ENCODE measurements at regions of chr4 and their contacts with region 1.

Region 1: GRCh38 chr4:38275331-38276100 is 315.3 kb downstream of the PTTG2 start:
- DNase-seq: peak; percentile 51 to 64
- H3K4me3 ChIP-seq: no peak overlapping the region
- H3K4me3 Mint-ChIP-seq: no peak overlapping the region
- H3K27ac Mint-ChIP-seq: peak overlapping the region; percentile 0
- H3K4me1 ChIP-seq: peaks cover 37% of the 10 kb centered on the region
- H3K4me1 Mint-ChIP-seq: peaks cover 22% of the 10 kb centered on the region
- H3K27me3 ChIP-seq: no peaks in the 10 kb centered on the region
- H3K27me3 Mint-ChIP-seq: no peaks in the 10 kb centered on the region
- CTCF ChIP-seq: no peak

Region 2: GRCh38 chr4:38230121-38230801 is 45.3 kb before region 1 on chr4:
- CTCF ChIA-PET with region 1: no interaction called
- POLR2A ChIA-PET with region 1: no interaction called
- intact Hi-C with region 1: loop called (anchors 1 kb)
- DNase-seq: peak; percentile 70 to 86
- H3K4me3 ChIP-seq: no peak overlapping the region
- H3K4me3 Mint-ChIP-seq: peak overlapping the region; percentile 10
- H3K27ac Mint-ChIP-seq: peak overlapping the region; percentile 46
- H3K4me1 ChIP-seq: peaks cover 23% of the 10 kb centered on the region
- H3K4me1 Mint-ChIP-seq: peaks cover 32% of the 10 kb centered on the region
- H3K27me3 ChIP-seq: no peaks in the 10 kb centered on the region; the same call in 1 of the 2 replicates
- H3K27me3 Mint-ChIP-seq: no peaks in the 10 kb centered on the region
- CTCF ChIP-seq: no peak

Region 3: DNA sequence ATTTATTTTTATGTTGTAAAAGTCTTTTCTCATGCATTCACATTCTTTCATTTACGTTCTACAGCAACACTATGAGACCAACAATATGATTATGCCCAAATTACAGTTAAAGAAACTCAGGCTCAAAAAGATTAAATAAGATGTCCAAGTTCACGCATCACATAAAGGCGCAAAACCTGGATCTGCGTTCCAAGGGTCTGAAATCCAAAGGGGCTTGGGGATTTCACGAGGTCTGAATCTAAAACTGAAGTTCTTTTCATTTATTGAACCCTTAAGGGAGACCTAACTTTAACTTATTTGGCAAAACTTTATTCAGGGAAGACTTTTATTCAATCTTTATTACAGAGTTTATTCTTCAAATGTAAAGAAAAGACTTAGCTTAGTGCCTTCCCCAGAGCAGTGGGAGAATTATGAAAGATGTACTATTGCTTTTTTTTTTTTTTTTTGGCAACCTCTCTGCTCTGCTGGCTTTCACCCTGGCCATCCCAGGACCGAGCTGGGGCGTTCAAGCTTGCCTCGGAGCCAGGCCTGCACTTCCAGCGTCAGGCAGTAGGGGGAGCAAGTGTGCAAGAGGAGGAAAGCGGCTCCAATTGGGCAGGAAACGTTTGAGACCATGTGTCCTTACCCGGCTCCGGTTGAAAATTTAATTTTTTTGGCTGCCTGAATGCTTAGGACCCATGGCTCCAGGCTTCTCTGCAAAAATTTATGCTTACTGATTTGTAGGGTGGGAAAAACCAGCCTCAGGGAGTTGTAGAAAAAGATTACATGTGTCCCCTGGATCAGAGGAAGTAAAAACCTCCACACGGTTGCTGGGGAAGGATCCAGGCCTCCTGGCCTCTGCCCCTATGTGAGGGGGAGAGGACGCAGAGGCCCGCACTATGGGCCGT is 44.2 kb after region 1 on chr4:
- CTCF ChIA-PET with region 1: interaction called, 10 read pairs
- POLR2A ChIA-PET with region 1: no interaction called
- intact Hi-C with region 1: no loop called
- DNase-seq: peak; percentile 83 to 89
- H3K4me3 ChIP-seq: no peak overlapping the region
- H3K4me3 Mint-ChIP-seq: peak overlapping the region; percentile 64
- H3K27ac Mint-ChIP-seq: no peak overlapping the region
- H3K4me1 ChIP-seq: peaks cover 17% of the 10 kb centered on the region
- H3K4me1 Mint-ChIP-seq: no peaks in the 10 kb centered on the region
- H3K27me3 ChIP-seq: no peaks in the 10 kb centered on the region
- H3K27me3 Mint-ChIP-seq: no peaks in the 10 kb centered on the region
- CTCF ChIP-seq: peak; percentile 91 to 92

Region 4: DNA sequence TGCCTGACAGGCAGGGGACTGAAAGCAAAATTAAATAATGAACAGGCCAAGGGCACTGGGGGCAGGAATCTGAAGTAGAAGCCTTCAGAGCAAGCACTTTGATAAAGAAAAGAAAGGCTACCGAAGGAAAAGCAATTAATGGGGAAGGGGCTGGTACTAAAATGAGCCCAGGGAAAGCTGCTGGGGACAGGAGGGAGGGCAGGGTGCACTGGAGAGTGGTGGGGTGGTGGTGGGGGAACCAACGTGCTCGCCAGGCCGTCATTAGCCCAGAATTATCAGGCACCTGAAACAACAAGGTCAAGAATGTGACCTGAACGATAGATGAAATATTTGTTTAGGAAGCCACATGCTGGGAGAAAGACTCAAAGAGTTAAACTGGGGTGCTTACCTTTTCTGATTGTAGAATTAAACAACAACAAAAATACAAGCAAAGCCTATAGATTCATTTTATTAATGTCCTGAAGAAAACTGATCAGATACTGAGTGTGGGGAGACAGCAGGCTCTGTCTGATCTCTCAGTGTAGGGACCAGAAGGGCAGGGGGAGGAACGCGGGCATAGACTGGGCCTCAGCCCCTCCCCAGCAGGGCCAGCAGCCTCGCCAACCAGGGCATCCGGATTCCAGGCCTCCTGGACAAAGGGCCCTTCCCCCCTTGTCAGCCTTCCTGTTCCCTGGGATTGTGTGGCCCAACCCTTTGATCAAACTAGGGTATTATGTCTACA is 148.8 kb after region 1 on chr4:
- CTCF ChIA-PET with region 1: no interaction called
- POLR2A ChIA-PET with region 1: no interaction called
- intact Hi-C with region 1: loop called (anchors 1 kb)
- DNase-seq: peak; percentile 67 to 84
- H3K4me3 ChIP-seq: no peak overlapping the region
- H3K4me3 Mint-ChIP-seq: peak overlapping the region; percentile 52
- H3K27ac Mint-ChIP-seq: peak overlapping the region; percentile 79
- H3K4me1 ChIP-seq: peaks cover 22% of the 10 kb centered on the region
- H3K4me1 Mint-ChIP-seq: peaks cover 22% of the 10 kb centered on the region
- H3K27me3 ChIP-seq: no peaks in the 10 kb centered on the region
- H3K27me3 Mint-ChIP-seq: no peaks in the 10 kb centered on the region
- CTCF ChIP-seq: no peak

Region 5: DNA sequence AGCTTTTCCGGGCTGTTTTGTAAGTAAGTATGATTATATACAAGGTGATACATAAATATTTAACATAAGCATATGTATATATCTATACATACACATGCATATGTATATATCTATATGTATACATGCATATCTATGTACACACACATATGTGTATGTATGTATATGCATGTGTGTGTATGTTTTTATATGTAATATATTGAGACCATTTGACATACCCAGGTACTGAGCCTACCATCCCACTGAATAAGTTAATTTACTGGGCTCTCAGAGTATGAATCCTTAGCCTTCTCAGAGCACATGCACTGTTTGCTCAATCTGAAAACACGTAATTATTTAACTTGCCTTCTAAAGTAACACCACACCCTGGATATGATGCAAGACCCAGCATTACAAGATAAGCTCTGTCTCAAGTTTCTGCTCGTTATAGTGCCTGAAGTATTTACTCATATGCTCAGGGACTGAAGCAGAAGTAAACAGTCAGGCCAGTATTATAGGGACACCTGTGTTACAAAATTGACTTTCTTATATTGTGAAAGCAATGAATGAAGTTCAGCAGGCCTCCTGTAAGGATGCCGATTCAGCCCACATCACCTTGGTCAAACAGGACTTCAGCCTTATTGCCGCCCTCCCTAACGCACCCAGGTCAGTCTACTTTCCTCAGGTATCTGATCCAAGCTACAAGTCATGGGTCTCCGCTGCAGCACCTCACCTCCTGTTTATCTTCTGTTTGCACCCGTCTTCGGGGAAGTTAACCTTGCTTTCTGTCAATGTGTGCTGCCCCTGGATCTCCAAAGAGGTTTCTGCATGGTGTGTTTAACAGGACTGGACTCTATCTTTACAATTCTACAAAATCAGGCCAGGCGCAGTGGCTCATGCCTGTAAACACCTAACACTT is 345.5 kb after region 1 on chr4:
- CTCF ChIA-PET with region 1: interaction called, 3 read pairs
- POLR2A ChIA-PET with region 1: no interaction called
- intact Hi-C with region 1: loop called (anchors 5 kb)
- DNase-seq: peak; percentile 81 to 90
- H3K4me3 ChIP-seq: no peak overlapping the region
- H3K4me3 Mint-ChIP-seq: peak overlapping the region; percentile 65
- H3K27ac Mint-ChIP-seq: peak overlapping the region; percentile 65
- H3K4me1 ChIP-seq: peaks cover 23% of the 10 kb centered on the region
- H3K4me1 Mint-ChIP-seq: peaks cover 21% of the 10 kb centered on the region
- H3K27me3 ChIP-seq: no peaks in the 10 kb centered on the region
- H3K27me3 Mint-ChIP-seq: no peaks in the 10 kb centered on the region
- CTCF ChIP-seq: no peak

Region 6: GRCh38 chr4:38663801-38664705 is 388.5 kb after region 1 on chr4 and contains the start of gene KLF3:
- CTCF ChIA-PET with region 1: no interaction called
- POLR2A ChIA-PET with region 1: no interaction called
- intact Hi-C with region 1: loop called (anchors 5 kb)
- DNase-seq: peak; percentile 90
- H3K4me3 ChIP-seq: peak within 1 kb of the TSS; percentile 89
- H3K4me3 Mint-ChIP-seq: peak within 1 kb of the TSS; percentile 87
- H3K27ac Mint-ChIP-seq: peak within 1 kb of the TSS; percentile 97
- H3K4me1 ChIP-seq: peaks cover 29% of the 10 kb centered on the region
- H3K4me1 Mint-ChIP-seq: peaks cover 30% of the 10 kb centered on the region
- H3K27me3 ChIP-seq: no peaks in the 10 kb centered on the region
- H3K27me3 Mint-ChIP-seq: no peaks in the 10 kb centered on the region
- CTCF ChIP-seq: no peak
- total RNA-seq, gene KLF3: 33.2 and 34.8 TPM in 2 replicates

Measured in Caco-2 (cell line).